ENCODE measurements at regions of chr9 and their contacts with region 1.

Region 1: GRCh38 chr9:133149126-133150107 is 14.3 kb downstream of the GBGT1 start:
- DNase-seq: peak; percentile 91 to 97 (median 96)
- ATAC-seq: peak; percentile 82
- H3K4me3 ChIP-seq: peak overlapping the region; percentile 52
- H3K27ac ChIP-seq: peak overlapping the region; percentile 33
- H3K4me1 ChIP-seq: no peaks in the 10 kb centered on the region
- H3K27me3 ChIP-seq: no peaks in the 10 kb centered on the region

Region 2: GRCh38 chr9:133035669-133036068 is 113.7 kb before region 1 on chr9:
- intact Hi-C with region 1: loop called in 3 of 4 experiments (anchors 5 kb)
- DNase-seq: no peak
- ATAC-seq: no peak
- H3K4me3 ChIP-seq: no peak overlapping the region
- H3K27ac ChIP-seq: no peak overlapping the region
- H3K4me1 ChIP-seq: peaks cover 3% of the 10 kb centered on the region
- H3K27me3 ChIP-seq: no peaks in the 10 kb centered on the region

Region 3: GRCh38 chr9:133044661-133045060 is 104.8 kb before region 1 on chr9:
- intact Hi-C with region 1: loop called in 3 of 4 experiments (anchors 5 kb)
- DNase-seq: no peak
- ATAC-seq: no peak
- H3K4me3 ChIP-seq: no peak overlapping the region
- H3K27ac ChIP-seq: no peak overlapping the region
- H3K4me1 ChIP-seq: no peaks in the 10 kb centered on the region
- H3K27me3 ChIP-seq: no peaks in the 10 kb centered on the region

Region 4: DNA sequence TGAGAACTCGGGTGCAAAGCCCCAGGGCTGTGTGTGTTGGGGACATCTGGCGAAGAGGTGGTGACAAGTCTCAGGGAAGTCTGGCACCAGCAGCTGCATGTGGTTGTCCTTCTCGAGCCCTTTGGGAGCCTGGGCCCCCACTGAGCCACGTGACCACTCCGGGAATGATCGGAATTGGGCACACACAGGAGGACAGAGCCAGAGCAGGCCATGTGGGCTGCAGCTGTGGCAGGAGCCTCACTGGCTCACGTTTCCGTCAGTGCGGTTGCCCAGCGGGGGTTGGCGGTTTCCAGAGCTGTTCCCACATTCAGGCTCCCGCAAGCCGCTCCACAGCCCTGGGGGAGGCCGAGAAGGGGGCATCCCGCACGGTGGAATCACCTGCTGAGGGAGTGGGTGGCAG is 94.5 kb before region 1 on chr9:
- intact Hi-C with region 1: loop called in 1 of 4 experiments (anchors 10 kb)
- DNase-seq: peak; percentile 64 to 90 (median 84)
- ATAC-seq: peak; percentile 80 to 86
- H3K4me3 ChIP-seq: no peak overlapping the region
- H3K27ac ChIP-seq: peak overlapping the region; percentile 82
- H3K4me1 ChIP-seq: peaks cover 3% of the 10 kb centered on the region
- H3K27me3 ChIP-seq: no peaks in the 10 kb centered on the region

Region 5: GRCh38 chr9:133103183-133103986 is 46.0 kb before region 1 on chr9:
- intact Hi-C with region 1: loop called (anchors 1 to 2 kb)
- DNase-seq: peak; percentile 66 to 89 (median 87)
- ATAC-seq: peak; percentile 53 to 72
- H3K4me3 ChIP-seq: no peak overlapping the region
- H3K27ac ChIP-seq: no peak overlapping the region
- H3K4me1 ChIP-seq: no peaks in the 10 kb centered on the region
- H3K27me3 ChIP-seq: no peaks in the 10 kb centered on the region

Measured in right cardiac atrium (tissue), 5 donors.